ENCODE measurements at regions of chr3 and their contacts with region 1.

Region 1: GRCh38 chr3:193693774-193694173 is 100.8 kb downstream of the OPA1 start:
- DNase-seq: peak; percentile 85
- ATAC-seq: peak; percentile 90
- H3K4me3 ChIP-seq: no peak overlapping the region
- H3K4me3 Mint-ChIP-seq: peak overlapping the region; percentile 11
- H3K27ac ChIP-seq: peak overlapping the region; percentile 1 to 88
- H3K27ac Mint-ChIP-seq: peak overlapping the region; percentile 71
- H3K4me1 ChIP-seq: peaks cover 13 to 18% of the 10 kb centered on the region in 2 donors
- H3K4me1 Mint-ChIP-seq: peaks cover 18% of the 10 kb centered on the region
- H3K27me3 ChIP-seq: no peaks in the 10 kb centered on the region
- H3K27me3 Mint-ChIP-seq: no peaks in the 10 kb centered on the region
- CTCF ChIP-seq: no peak

Region 2: GRCh38 chr3:193743702-193744047 is 49.9 kb after region 1 on chr3:
- CTCF ChIA-PET with region 1: no interaction called
- POLR2A ChIA-PET with region 1: no interaction called
- intact Hi-C with region 1: loop called (anchors 10 kb)
- DNase-seq: peak; percentile 63
- ATAC-seq: peak; percentile 45
- H3K4me3 ChIP-seq: no peak overlapping the region
- H3K4me3 Mint-ChIP-seq: peak overlapping the region; percentile 56
- H3K27ac ChIP-seq: peak overlapping the region; percentile 16 to 75
- H3K27ac Mint-ChIP-seq: peak overlapping the region; percentile 48
- H3K4me1 ChIP-seq: peaks cover 19 to 26% of the 10 kb centered on the region in 2 donors
- H3K4me1 Mint-ChIP-seq: peaks cover 24% of the 10 kb centered on the region
- H3K27me3 ChIP-seq: peaks cover 0 to 2% (median 0%) of the 10 kb centered on the region in 4 experiments
- H3K27me3 Mint-ChIP-seq: no peaks in the 10 kb centered on the region
- CTCF ChIP-seq: no peak